ENCODE measurements at regions of chr3 and their contacts with region 1.

Region 1: DNA sequence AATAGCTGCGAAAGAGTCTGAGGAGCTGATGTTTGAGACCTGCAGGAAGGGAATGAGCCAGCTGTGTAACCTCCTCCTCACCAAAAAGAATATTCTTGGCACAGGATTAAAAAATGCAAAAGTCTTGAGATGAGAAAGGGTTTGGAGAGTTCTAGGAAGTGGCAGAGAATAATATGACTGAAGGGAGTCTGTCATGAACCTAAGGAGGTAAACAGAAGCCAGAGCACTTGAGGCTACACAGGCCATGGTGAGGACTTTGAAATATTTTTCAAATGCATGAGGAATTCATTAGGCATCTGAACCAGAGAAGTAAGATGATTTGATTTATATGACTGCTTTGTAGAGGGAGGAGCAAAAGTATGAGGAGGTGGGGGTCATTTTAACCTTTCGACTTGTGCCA is 347.8 kb downstream of the EPHA3 start:
- DNase-seq: no peak
- ATAC-seq: no peak
- H3K4me3 Mint-ChIP-seq: no peak overlapping the region
- H3K27ac Mint-ChIP-seq: no peak overlapping the region
- H3K4me1 Mint-ChIP-seq: no peaks in the 10 kb centered on the region
- H3K27me3 Mint-ChIP-seq: no peaks in the 10 kb centered on the region

Region 2: GRCh38 chr3:89467898-89468363 is 12.7 kb after region 1 on chr3:
- CTCF ChIA-PET with region 1: no interaction called
- POLR2A ChIA-PET with region 1: no interaction called
- intact Hi-C with region 1: loop called in 1 of 2 experiments (anchors 1 kb)
- DNase-seq: no peak
- ATAC-seq: no peak
- H3K4me3 Mint-ChIP-seq: no peak overlapping the region
- H3K27ac Mint-ChIP-seq: no peak overlapping the region
- H3K4me1 Mint-ChIP-seq: no peaks in the 10 kb centered on the region
- H3K27me3 Mint-ChIP-seq: no peaks in the 10 kb centered on the region

Region 3: DNA sequence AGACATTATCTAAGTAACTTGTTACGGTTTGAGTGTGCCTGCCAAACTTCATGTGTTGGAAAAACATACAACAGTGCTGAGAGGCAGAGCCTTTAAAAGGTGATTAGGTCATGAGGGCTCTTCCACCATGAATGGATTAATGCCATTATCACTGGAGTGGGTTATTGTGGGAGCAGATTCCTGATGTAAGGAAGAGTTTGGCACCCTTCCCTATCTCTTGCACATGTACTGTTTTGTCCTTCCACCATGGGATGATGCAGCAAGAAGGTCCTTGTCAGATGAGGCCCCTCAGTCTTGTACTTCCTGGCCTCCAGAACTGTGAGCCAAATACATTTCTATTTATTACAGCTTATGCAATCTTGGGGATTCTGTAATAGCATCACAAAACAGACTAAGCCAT is 66.1 kb after region 1 on chr3:
- CTCF ChIA-PET with region 1: no interaction called
- POLR2A ChIA-PET with region 1: no interaction called
- intact Hi-C with region 1: loop called in 1 of 2 experiments (anchors 10 kb)
- DNase-seq: no peak
- ATAC-seq: no peak
- H3K4me3 Mint-ChIP-seq: no peak overlapping the region
- H3K27ac Mint-ChIP-seq: no peak overlapping the region
- H3K4me1 Mint-ChIP-seq: no peaks in the 10 kb centered on the region
- H3K27me3 Mint-ChIP-seq: no peaks in the 10 kb centered on the region

Measured in activated CD4-positive, alpha-beta T cell treated with anti-CD3 and anti-CD28 coated beads for 36 hours (primary cell).